Pancreas (tissue), 10 donors: ENCODE measurements at regions of chr4 and their contacts with region 1.

Region 1: GRCh38 chr4:82428969-82429727 is 1.1 kb downstream of the HNRNPDL start:
- DNase-seq: peak; percentile 89 to 99 (median 96)
- ATAC-seq: peak; percentile 79 to 87 (median 80)
- H3K4me3 ChIP-seq: peak overlapping the region; percentile 86 to 96 (median 91)
- H3K27ac ChIP-seq: peak overlapping the region; percentile 96 to 98 (median 96)
- H3K4me1 ChIP-seq: peaks cover 9 to 36% (median 16%) of the 10 kb centered on the region in 3 donors
- H3K27me3 ChIP-seq: no peaks in the 10 kb centered on the region
- CTCF ChIP-seq: peak; percentile 95 to 99 (median 98)

Region 2: DNA sequence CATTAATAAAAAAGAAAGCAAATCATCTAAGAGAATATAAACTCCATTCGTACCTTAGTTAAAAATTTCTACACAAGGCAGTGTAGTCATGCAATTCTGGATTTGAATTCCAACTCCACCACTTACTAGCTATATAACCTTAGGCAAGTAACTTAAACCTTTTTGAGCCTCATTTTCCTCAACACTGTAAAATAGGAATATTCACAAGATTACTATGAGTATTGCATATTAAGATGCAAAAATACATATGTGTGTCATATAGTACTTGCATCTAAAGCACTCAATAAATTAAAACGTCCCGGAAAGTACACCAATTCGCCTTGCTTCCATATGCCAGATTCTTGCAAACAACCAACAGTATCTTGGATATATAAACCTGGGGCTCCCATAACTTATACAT is 97.3 kb before region 1 on chr4:
- intact Hi-C with region 1: no loop called
- DNase-seq: no peak
- ATAC-seq: no peak
- H3K4me3 ChIP-seq: no peak overlapping the region
- H3K27ac ChIP-seq: no peak overlapping the region
- H3K4me1 ChIP-seq: no peaks in the 10 kb centered on the region
- H3K27me3 ChIP-seq: no peaks in the 10 kb centered on the region
- CTCF ChIP-seq: no peak

Region 3: DNA sequence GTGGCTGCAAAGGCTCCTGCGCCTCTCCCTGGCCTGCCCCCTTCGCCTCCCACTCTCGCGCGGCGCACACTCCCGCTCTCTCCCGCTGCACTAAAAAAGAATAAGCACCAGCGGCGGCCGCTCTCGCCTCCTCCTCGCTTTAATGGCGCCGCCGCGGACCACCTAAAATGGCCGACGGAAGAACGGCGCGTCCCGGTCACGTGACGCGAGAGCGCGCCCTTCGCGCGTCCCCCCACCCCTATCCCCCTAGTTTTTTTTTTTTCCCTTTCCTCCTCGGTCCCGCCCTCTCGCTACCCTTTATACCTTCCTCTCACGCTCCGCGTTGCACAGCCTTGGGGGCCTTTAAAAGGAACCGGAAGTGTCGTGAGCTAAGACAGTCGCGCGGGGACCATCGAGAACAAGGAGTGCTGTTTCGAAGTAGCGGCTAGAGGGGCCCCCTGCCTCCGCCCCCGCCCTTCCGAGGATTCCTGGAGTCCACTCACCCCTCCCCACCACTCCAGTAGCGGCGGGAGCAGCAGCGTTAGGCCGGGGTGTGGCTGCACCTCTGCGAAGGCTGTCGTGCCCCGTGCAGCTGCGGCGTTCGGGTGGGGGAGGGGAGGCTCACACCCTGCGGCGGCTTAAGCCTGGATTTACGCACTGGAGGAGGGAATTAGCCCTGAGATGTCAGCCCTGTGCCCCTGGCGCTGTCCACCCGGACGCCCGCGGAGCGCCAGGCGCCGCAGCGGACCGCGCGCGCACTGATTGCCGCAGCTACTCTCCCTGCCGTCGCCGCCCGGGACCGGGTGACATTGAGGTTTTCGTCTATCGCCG is 55.1 kb before region 1 on chr4 and contains the start of gene HNRNPD:
- intact Hi-C with region 1: loop called in 2 of 3 experiments (anchors 5 to 10 kb)
- DNase-seq: peak; percentile 93 to 99 (median 98)
- ATAC-seq: peak; percentile 82 to 91 (median 87)
- H3K4me3 ChIP-seq: peak within 1 kb of the TSS; percentile 85 to 98 (median 88)
- H3K27ac ChIP-seq: peak within 1 kb of the TSS; percentile 99 to 100 (median 100)
- H3K4me1 ChIP-seq: peaks cover 11 to 30% (median 14%) of the 10 kb centered on the region in 3 donors
- H3K27me3 ChIP-seq: no peaks in the 10 kb centered on the region
- CTCF ChIP-seq: no peak
- total RNA-seq, gene HNRNPD: 52.7 to 92.0 (median 72.7) TPM

Region 4: DNA sequence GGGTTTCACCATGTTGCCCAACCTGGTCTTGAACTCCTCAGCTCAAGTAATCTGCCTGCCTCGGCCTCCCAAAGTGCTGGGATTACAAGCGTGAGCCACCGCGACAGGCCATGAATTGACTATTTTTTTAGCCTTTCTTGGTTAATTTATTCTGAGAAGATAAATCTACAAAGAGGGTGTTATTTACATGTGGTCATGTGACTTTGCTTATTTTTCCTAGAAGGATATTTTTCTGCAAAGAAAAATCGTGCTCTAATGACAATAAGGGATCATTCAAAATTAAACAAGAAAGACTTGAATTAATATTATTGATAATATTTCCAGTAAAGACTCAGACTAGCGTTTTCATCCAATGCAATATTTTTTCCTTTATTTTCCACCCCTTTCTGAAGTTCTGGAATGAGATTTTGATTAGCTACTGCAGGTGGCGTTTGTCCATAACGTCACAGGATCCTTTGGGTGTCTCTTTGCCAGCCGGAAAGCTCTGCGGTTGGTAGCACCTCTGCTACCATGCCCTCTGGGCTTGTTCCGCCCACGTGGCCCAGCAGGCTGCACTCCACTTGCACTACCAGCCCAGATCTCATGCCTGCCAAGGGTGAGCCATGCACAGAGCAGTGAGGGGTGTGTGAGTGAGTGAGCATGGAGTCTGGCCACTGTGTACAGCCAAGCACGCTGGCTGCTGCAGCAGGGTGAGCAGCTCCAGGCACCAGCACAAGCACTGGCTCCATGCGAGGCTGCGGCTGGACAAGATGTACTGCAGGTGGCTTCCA is 49.0 kb before region 1 on chr4:
- intact Hi-C with region 1: loop called in 2 of 3 experiments (anchors 5 to 10 kb)
- DNase-seq: no peak
- ATAC-seq: peak in 1 of 4 donors; percentile 60
- H3K4me3 ChIP-seq: no peak overlapping the region
- H3K27ac ChIP-seq: no peak overlapping the region
- H3K4me1 ChIP-seq: peaks cover 0 to 8% (median 0%) of the 10 kb centered on the region in 3 donors
- H3K27me3 ChIP-seq: no peaks in the 10 kb centered on the region
- CTCF ChIP-seq: no peak

Region 5: DNA sequence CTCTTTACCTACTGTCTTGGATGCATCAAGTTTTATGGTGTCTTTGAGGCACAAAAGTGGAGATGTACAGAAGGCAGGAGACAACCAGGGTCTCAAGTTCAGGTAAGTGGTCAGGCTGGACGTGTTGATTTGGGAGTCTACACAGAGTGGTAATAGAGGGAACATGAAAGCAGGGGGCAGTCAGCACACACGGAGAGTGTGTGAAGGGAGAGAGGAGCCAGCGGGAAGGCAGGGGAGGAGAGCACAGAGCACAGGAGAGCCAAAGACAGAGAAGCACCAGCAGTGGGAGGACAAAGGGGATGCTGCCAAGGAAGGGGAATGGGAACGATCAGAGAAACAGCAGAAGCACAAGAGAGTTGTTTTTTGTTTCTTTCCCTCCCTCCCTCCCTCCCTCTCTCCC is 99.7 kb after region 1 on chr4:
- intact Hi-C with region 1: no loop called
- DNase-seq: no peak
- ATAC-seq: peak in 1 of 4 donors; percentile 37
- H3K4me3 ChIP-seq: no peak overlapping the region
- H3K27ac ChIP-seq: no peak overlapping the region
- H3K4me1 ChIP-seq: no peaks in the 10 kb centered on the region
- H3K27me3 ChIP-seq: no peaks in the 10 kb centered on the region
- CTCF ChIP-seq: no peak

Region 6: GRCh38 chr4:82578935-82579334 is 149.8 kb after region 1 on chr4:
- intact Hi-C with region 1: no loop called
- DNase-seq: no peak
- ATAC-seq: no peak
- H3K4me3 ChIP-seq: no peak overlapping the region
- H3K27ac ChIP-seq: no peak overlapping the region
- H3K4me1 ChIP-seq: peaks cover 0 to 4% (median 0%) of the 10 kb centered on the region in 3 donors
- H3K27me3 ChIP-seq: no peaks in the 10 kb centered on the region
- CTCF ChIP-seq: no peak

Region 7: DNA sequence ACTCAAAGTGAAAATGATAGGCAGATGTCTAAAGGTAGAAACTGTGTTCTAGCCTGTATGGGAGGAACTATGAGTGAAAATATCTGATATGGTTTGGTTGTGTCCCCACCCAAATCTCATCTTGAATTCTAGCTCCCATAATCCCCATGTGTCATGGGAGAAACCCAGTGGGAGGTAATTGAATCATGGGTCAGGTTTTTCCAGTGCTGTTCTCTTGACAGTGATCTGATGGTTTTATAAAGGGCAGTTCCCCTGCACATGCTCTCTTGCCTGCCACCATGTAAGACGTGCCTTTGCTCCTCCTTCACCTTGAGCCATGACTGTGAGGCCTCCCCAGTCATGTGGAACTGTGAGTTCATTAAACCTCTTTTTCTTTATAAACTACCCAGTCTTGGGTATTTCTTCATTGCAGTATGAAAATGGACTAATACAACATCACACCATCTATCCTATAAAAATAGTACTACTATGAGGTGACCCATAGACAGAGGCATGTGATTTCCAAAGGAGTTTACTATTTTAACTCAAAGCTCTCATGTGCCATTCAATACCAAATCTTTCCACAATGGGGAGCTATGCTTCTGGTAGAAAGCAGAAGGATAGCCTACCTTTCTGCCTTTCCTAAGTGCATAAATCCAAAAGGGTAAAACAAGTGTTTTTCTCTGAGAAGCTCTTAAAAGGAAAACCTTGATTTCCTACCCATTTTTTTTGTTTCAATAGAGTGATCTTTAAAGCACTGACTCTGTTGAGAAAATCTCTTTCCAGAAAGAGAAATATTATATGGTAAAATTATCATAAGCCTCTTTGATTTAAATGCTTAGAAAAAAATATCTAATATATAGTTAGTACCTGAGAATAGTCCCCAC is 423.0 kb after region 1 on chr4:
- intact Hi-C with region 1: no loop called
- DNase-seq: no peak
- ATAC-seq: peak; percentile 44 to 72 (median 58)
- H3K4me3 ChIP-seq: no peak overlapping the region
- H3K27ac ChIP-seq: no peak overlapping the region
- H3K4me1 ChIP-seq: no peaks in the 10 kb centered on the region
- H3K27me3 ChIP-seq: no peaks in the 10 kb centered on the region
- CTCF ChIP-seq: peak in 2 of 4 donors; percentile 21 to 43